ENCODE measurements at regions of chr2 and their contacts with region 1.

Region 1: DNA sequence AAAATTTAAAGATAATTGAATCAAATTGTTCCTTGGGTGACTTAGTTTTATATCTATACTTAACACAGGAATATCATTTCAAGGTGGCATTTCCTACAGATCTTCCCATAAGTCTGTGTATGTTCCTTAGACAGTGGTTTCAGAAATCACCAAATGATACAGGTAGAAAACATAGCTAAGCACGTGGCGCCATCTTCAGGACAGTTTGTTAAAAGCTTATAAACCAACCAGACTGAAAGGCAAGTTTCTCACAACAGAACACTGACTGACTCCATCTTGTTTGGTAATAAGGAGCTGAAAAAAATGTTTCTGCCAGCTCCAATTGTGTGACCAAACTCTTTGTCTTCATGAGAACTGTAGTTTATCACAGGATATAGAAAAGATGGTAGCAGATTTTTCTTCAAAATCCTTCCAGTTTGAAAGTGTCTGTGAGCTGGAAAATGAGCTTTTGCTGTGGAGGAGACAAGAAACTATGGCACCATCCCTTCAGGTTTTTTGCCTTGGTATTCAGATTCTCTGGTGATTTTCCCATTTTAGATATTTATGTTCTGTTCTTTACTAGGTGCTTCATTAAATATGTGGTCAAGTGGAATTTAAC is 34.8 kb upstream of the NEUROD1 start:
- DNase-seq: peak; percentile 26
- ATAC-seq: peak; percentile 71
- H3K4me3 Mint-ChIP-seq: no peak overlapping the region
- H3K27ac Mint-ChIP-seq: no peak overlapping the region
- H3K4me1 Mint-ChIP-seq: no peaks in the 10 kb centered on the region
- H3K27me3 Mint-ChIP-seq: no peaks in the 10 kb centered on the region
- CTCF ChIP-seq: no peak

Region 2: DNA sequence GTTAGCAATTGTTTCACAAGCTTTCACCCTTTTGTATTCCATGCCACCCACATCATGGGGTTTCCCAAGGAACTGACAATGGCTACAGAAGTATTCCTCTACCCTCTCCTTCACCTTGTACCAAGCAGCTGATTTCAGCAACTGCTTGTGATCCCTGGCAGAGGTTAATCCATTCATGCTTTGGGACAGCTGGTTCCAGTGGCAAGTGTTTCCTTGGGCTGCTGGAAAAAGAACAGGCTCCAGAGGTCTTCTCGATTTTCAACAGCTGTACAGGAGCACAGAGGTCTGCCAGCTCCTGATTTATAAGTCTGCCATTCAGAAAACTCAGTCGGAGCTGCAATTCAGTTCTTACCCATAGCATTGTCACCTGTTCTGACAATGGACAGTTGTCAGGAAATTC is 1468.9 kb before region 1 on chr2:
- CTCF ChIA-PET with region 1: no interaction called
- POLR2A ChIA-PET with region 1: no interaction called
- intact Hi-C with region 1: loop called (anchors 5 kb)
- DNase-seq: no peak
- ATAC-seq: no peak
- H3K4me3 Mint-ChIP-seq: no peak overlapping the region
- H3K27ac Mint-ChIP-seq: no peak overlapping the region
- H3K4me1 Mint-ChIP-seq: no peaks in the 10 kb centered on the region
- H3K27me3 Mint-ChIP-seq: no peaks in the 10 kb centered on the region
- CTCF ChIP-seq: no peak

Region 3: DNA sequence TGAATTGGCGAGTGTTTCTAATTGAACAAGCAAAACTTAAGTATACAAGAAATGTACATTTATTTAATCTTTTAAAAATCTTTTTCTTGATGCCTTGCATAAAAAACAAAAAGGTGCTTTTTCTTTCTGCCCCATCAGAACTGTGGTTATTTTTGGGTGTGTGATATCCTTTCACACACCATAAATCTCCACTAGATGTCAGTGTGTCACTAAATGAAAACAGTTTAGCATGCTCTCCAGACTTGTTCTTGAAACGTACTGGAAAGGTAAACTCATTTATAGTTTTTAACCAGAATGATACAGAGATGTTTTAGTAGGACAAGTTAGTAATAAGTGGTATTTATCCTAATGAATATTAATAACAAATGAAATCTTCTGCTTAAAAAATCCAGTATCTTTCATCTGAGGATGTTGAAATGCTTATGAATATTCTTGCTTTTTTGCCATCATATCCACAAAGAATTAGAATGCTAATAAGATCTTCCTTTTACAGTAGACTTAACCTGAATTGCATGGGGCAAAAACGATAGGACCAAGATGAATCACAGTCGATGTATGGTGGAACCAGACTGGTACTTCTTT is 637.9 kb before region 1 on chr2:
- CTCF ChIA-PET with region 1: interaction called, 6 read pairs
- POLR2A ChIA-PET with region 1: no interaction called
- intact Hi-C with region 1: loop called (anchors 1 kb)
- DNase-seq: no peak
- ATAC-seq: peak; percentile 58
- H3K4me3 Mint-ChIP-seq: no peak overlapping the region
- H3K27ac Mint-ChIP-seq: no peak overlapping the region
- H3K4me1 Mint-ChIP-seq: no peaks in the 10 kb centered on the region
- H3K27me3 Mint-ChIP-seq: no peaks in the 10 kb centered on the region
- CTCF ChIP-seq: no peak

Region 4: GRCh38 chr2:181104512-181105115 is 610.5 kb before region 1 on chr2:
- CTCF ChIA-PET with region 1: interaction called, 57 read pairs
- POLR2A ChIA-PET with region 1: no interaction called
- intact Hi-C with region 1: loop called (anchors 1 kb)
- DNase-seq: no peak
- ATAC-seq: no peak
- H3K4me3 Mint-ChIP-seq: no peak overlapping the region
- H3K27ac Mint-ChIP-seq: no peak overlapping the region
- H3K4me1 Mint-ChIP-seq: peaks cover 8% of the 10 kb centered on the region
- H3K27me3 Mint-ChIP-seq: no peaks in the 10 kb centered on the region
- CTCF ChIP-seq: no peak

Region 5: GRCh38 chr2:181466661-181467576 is 248.2 kb before region 1 on chr2:
- CTCF ChIA-PET with region 1: interaction called, 9 read pairs
- POLR2A ChIA-PET with region 1: no interaction called
- intact Hi-C with region 1: loop called (anchors 1 kb)
- DNase-seq: peak; percentile 53
- ATAC-seq: peak; percentile 45
- H3K4me3 Mint-ChIP-seq: no peak overlapping the region
- H3K27ac Mint-ChIP-seq: peak overlapping the region; percentile 26
- H3K4me1 Mint-ChIP-seq: peaks cover 88% of the 10 kb centered on the region
- H3K27me3 Mint-ChIP-seq: no peaks in the 10 kb centered on the region
- CTCF ChIP-seq: peak; percentile 82

Region 6: GRCh38 chr2:181573140-181573736 is 141.9 kb before region 1 on chr2:
- CTCF ChIA-PET with region 1: interaction called, 82 read pairs
- POLR2A ChIA-PET with region 1: no interaction called
- intact Hi-C with region 1: loop called (anchors 1 kb)
- DNase-seq: no peak
- ATAC-seq: no peak
- H3K4me3 Mint-ChIP-seq: no peak overlapping the region
- H3K27ac Mint-ChIP-seq: no peak overlapping the region
- H3K4me1 Mint-ChIP-seq: no peaks in the 10 kb centered on the region
- H3K27me3 Mint-ChIP-seq: peaks cover 7% of the 10 kb centered on the region
- CTCF ChIP-seq: no peak

Region 7: GRCh38 chr2:181857202-181857870 is 142.2 kb after region 1 on chr2:
- CTCF ChIA-PET with region 1: no interaction called
- POLR2A ChIA-PET with region 1: no interaction called
- intact Hi-C with region 1: no loop called
- DNase-seq: no peak
- ATAC-seq: no peak
- H3K4me3 Mint-ChIP-seq: no peak overlapping the region
- H3K27ac Mint-ChIP-seq: no peak overlapping the region
- H3K4me1 Mint-ChIP-seq: no peaks in the 10 kb centered on the region
- H3K27me3 Mint-ChIP-seq: no peaks in the 10 kb centered on the region
- CTCF ChIP-seq: no peak

Measured in activated B cell treated with CpG ODN at 0.5 μM for 24 hours (primary cell).